ENCODE measurements at regions of chr3 and their contacts with region 1.

Region 1: DNA sequence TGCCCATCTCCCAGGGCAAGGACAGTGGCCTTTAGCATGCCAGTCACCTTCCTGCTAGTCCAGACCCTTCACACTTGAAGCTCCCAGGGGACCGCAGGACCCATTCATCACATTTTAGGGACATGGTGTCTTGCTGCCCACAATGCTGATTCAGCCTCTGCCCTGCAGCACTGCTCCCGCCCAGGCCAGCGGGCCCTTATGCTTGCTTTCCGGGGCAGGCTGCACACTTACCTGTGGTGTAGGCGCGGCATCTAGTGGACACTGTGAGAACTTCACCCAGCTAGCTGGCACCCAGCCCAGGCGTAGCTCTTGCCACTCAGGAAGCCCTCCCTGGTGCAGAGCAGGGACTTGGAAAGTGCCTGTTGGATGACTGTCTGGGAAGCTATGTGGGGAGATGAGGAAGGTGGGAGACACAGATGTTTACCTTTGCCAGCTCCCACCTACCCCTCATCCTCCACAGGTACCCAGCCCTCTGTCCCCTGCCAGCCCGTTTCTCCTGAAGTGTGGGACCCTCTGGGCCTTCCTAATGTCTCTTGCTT is 26.2 kb upstream of the NR2C2 start:
- DNase-seq: peak; percentile 58 to 74 (median 71)
- H3K4me3 ChIP-seq: no peak overlapping the region
- H3K4me3 Mint-ChIP-seq: no peak overlapping the region
- H3K27ac ChIP-seq: no peak overlapping the region
- H3K27ac Mint-ChIP-seq: no peak overlapping the region
- H3K4me1 ChIP-seq: no peaks in the 10 kb centered on the region
- H3K4me1 Mint-ChIP-seq: no peaks in the 10 kb centered on the region
- H3K27me3 ChIP-seq: no peaks in the 10 kb centered on the region
- H3K27me3 Mint-ChIP-seq: peaks cover 0 to 6% (median 2%) of the 10 kb centered on the region in 3 donors
- CTCF ChIP-seq: peak; percentile 99

Region 2: GRCh38 chr3:14633819-14634424 is 287.2 kb before region 1 on chr3:
- intact Hi-C with region 1: loop called (anchors 2 kb)
- DNase-seq: peak; percentile 60 to 75 (median 63)
- H3K4me3 ChIP-seq: no peak overlapping the region
- H3K4me3 Mint-ChIP-seq: no peak overlapping the region
- H3K27ac ChIP-seq: no peak overlapping the region
- H3K27ac Mint-ChIP-seq: no peak overlapping the region
- H3K4me1 ChIP-seq: no peaks in the 10 kb centered on the region
- H3K4me1 Mint-ChIP-seq: peaks cover 3% of the 10 kb centered on the region
- H3K27me3 ChIP-seq: peaks cover 0 to 2% of the 10 kb centered on the region in 2 donors
- H3K27me3 Mint-ChIP-seq: peaks cover 0 to 14% (median 3%) of the 10 kb centered on the region in 3 donors
- CTCF ChIP-seq: peak; percentile 84

Region 3: GRCh38 chr3:14791343-14791945 is 129.7 kb before region 1 on chr3:
- intact Hi-C with region 1: loop called (anchors 2 to 10 kb)
- DNase-seq: peak in 1 of 3 donors; percentile 19
- H3K4me3 ChIP-seq: no peak overlapping the region
- H3K4me3 Mint-ChIP-seq: no peak overlapping the region
- H3K27ac ChIP-seq: no peak overlapping the region
- H3K27ac Mint-ChIP-seq: peak overlapping the region in 1 of 7 donors; percentile 50
- H3K4me1 ChIP-seq: no peaks in the 10 kb centered on the region
- H3K4me1 Mint-ChIP-seq: peaks cover 2% of the 10 kb centered on the region
- H3K27me3 ChIP-seq: peaks cover 0 to 2% of the 10 kb centered on the region in 2 donors
- H3K27me3 Mint-ChIP-seq: peaks cover 2 to 12% (median 4%) of the 10 kb centered on the region in 3 donors
- CTCF ChIP-seq: peak; percentile 45